BJ (cell line): ENCODE measurements at regions of chr18 and their contacts with region 1.

Region 1: DNA sequence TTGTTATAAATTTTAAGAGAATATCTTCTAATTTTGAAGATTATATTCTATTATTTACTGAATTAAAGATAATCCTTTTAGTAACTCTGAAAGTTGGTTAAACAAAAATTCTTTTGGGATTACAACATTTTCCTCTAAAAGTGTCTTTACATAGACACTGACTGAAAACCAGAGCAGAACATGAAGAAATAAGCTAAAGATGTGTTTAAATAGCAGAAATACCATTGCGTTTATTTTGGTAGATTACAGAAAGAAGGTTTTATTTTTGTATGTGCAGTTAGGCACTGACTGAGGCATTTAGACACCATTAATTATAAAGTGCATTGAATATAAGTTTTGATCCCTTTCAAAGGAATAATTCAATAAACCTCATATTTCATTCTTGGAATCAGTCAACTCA is 13.5 kb upstream of the NPC1 start:
- DNase-seq: no peak
- H3K4me3 ChIP-seq: no peak overlapping the region
- H3K27me3 ChIP-seq: no peaks in the 10 kb centered on the region
- CTCF ChIP-seq: no peak

Region 2: GRCh38 chr18:23586249-23587196 is 13.3 kb before region 1 on chr18 and contains the start of gene NPC1:
- CTCF ChIA-PET with region 1: interaction called, 14 read pairs
- POLR2A ChIA-PET with region 1: no interaction called
- DNase-seq: peak; percentile 75
- H3K4me3 ChIP-seq: peak within 1 kb of the TSS; percentile 84
- H3K27me3 ChIP-seq: no peaks in the 10 kb centered on the region
- CTCF ChIP-seq: peak; percentile 84
- polyA plus RNA-seq, gene NPC1: 34.2 and 54.5 TPM in 2 replicates